CD8-positive, alpha-beta T cell (primary cell): ENCODE measurements at regions of chr10 and their contacts with region 1.

Region 1: DNA sequence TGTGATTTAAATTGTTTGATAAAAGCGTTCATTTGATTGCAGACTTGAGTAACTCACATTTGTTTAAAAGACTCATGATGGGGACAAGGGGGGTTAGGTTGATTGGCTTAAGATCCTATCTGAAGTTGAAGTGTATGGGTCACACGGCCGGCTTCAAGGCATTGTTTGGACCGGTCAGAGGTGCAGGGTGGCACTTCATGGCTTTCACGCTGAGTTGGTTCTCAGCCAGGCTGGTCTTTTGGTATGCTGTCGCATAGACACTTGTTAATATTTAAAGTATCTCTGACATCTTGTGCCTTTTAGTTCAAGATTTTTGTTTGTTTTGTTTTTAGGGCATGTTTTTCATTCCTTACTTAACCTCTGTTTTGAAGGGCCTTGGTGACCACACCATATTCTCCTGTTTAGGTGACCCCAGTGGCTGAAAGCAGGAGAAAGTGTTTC is 58.1 kb downstream of the CCNY start:
- DNase-seq: no peak
- ATAC-seq: no peak
- H3K4me3 ChIP-seq: no peak overlapping the region
- H3K4me3 Mint-ChIP-seq: no peak overlapping the region
- H3K27ac ChIP-seq: no peak overlapping the region
- H3K27ac Mint-ChIP-seq: no peak overlapping the region
- H3K4me1 ChIP-seq: no peaks in the 10 kb centered on the region
- H3K4me1 Mint-ChIP-seq: peaks cover 84% of the 10 kb centered on the region
- H3K27me3 ChIP-seq: no peaks in the 10 kb centered on the region
- H3K27me3 Mint-ChIP-seq: no peaks in the 10 kb centered on the region
- CTCF ChIP-seq: no peak

Region 2: GRCh38 chr10:34899161-34899560 is 495.3 kb before region 1 on chr10:
- CTCF ChIA-PET with region 1: no interaction called
- POLR2A ChIA-PET with region 1: no interaction called
- intact Hi-C with region 1: no loop called
- DNase-seq: no peak
- ATAC-seq: no peak
- H3K4me3 ChIP-seq: no peak overlapping the region
- H3K4me3 Mint-ChIP-seq: no peak overlapping the region
- H3K27ac ChIP-seq: no peak overlapping the region
- H3K27ac Mint-ChIP-seq: no peak overlapping the region
- H3K4me1 ChIP-seq: no peaks in the 10 kb centered on the region
- H3K4me1 Mint-ChIP-seq: no peaks in the 10 kb centered on the region
- H3K27me3 ChIP-seq: no peaks in the 10 kb centered on the region
- H3K27me3 Mint-ChIP-seq: no peaks in the 10 kb centered on the region
- CTCF ChIP-seq: no peak

Region 3: GRCh38 chr10:34979938-34980337 is 414.5 kb before region 1 on chr10:
- CTCF ChIA-PET with region 1: no interaction called
- POLR2A ChIA-PET with region 1: no interaction called
- intact Hi-C with region 1: no loop called
- DNase-seq: no peak
- ATAC-seq: no peak
- H3K4me3 ChIP-seq: no peak overlapping the region
- H3K4me3 Mint-ChIP-seq: no peak overlapping the region
- H3K27ac ChIP-seq: no peak overlapping the region
- H3K27ac Mint-ChIP-seq: no peak overlapping the region
- H3K4me1 ChIP-seq: no peaks in the 10 kb centered on the region
- H3K4me1 Mint-ChIP-seq: no peaks in the 10 kb centered on the region
- H3K27me3 ChIP-seq: no peaks in the 10 kb centered on the region
- H3K27me3 Mint-ChIP-seq: no peaks in the 10 kb centered on the region
- CTCF ChIP-seq: no peak

Region 4: DNA sequence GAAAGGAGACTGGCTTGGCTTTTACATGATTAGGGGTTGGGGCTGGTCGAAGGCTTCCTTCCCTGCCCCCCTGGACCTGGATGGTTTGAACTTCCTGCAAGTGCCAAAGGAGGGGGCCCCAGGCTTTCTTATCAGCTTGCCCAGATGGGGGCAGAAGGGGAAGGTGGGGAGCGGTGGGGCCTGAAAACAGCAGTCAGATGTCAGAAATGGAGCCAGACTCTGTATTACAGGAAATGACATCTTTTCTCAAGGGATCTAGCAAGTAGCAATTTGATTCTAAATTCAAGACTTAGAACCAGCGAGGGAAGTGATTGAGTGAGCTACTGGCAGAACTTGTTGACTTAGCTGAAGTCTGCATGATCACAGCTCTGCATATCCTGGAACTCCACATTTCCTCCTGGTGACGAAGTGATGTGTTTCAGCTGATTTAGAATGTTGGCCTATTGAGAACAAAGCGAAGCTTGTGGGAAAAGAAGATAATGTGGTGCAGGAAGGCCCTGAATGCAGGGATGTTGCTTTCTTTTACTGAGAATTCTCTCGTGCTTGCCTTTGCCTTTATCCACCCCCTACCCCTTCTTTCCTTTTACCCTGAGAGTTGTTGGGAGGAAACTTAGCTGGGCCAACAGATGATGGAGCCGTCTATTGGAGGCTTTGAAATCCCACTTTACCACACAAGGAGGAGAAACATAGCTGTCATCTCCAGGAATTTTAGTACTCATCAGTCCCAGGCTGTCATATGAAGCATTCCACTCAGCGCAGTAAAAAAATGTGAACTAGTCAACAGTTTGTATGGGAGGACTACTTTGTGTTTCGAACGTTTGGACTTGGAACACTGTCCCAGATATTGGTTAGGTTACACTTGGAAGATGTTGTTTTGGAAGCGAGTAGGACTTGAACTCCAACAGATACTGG is 14.9 kb before region 1 on chr10:
- CTCF ChIA-PET with region 1: no interaction called
- POLR2A ChIA-PET with region 1: no interaction called
- intact Hi-C with region 1: no loop called
- DNase-seq: peak in 5 of 9 experiments; percentile 16 to 65 (median 35)
- ATAC-seq: peak; percentile 75
- H3K4me3 ChIP-seq: no peak overlapping the region
- H3K4me3 Mint-ChIP-seq: peak overlapping the region; percentile 69
- H3K27ac ChIP-seq: peak overlapping the region in 1 of 2 experiments; percentile 10
- H3K27ac Mint-ChIP-seq: peak overlapping the region; percentile 83
- H3K4me1 ChIP-seq: peaks cover 40% of the 10 kb centered on the region
- H3K4me1 Mint-ChIP-seq: peaks cover 82% of the 10 kb centered on the region
- H3K27me3 ChIP-seq: no peaks in the 10 kb centered on the region
- H3K27me3 Mint-ChIP-seq: no peaks in the 10 kb centered on the region
- CTCF ChIP-seq: no peak

Region 5: GRCh38 chr10:35426657-35427056 is 32.2 kb after region 1 on chr10:
- CTCF ChIA-PET with region 1: no interaction called
- POLR2A ChIA-PET with region 1: no interaction called
- intact Hi-C with region 1: loop called in 1 of 2 experiments (anchors 2 kb)
- DNase-seq: no peak
- ATAC-seq: no peak
- H3K4me3 ChIP-seq: no peak overlapping the region
- H3K4me3 Mint-ChIP-seq: no peak overlapping the region
- H3K27ac ChIP-seq: no peak overlapping the region
- H3K27ac Mint-ChIP-seq: no peak overlapping the region
- H3K4me1 ChIP-seq: peaks cover 6% of the 10 kb centered on the region
- H3K4me1 Mint-ChIP-seq: peaks cover 64% of the 10 kb centered on the region
- H3K27me3 ChIP-seq: no peaks in the 10 kb centered on the region
- H3K27me3 Mint-ChIP-seq: no peaks in the 10 kb centered on the region
- CTCF ChIP-seq: no peak